Mammary epithelial cell (primary cell): ENCODE measurements at regions of chr14 and their contacts with region 1.

Region 1: DNA sequence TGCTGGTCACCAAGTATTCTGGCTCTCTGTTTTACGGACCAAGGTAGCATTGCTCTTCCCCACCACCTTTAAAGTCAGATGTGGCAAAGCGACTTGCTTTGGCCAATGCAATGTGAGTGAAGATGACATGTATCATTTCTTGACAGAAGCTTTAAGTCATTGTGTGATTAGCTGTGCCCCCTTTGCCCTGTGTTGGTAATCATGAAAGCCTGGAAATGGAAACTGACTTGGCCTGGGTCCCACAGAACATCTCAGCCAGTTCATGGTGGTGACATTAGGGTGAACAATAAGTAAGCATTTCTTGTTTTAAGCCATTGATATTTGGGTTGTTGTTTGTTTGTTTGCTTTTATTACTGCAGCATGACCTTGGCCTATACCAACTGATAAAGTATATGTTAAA is 15.9 kb upstream of the YLPM1 start:
- DNase-seq: no peak
- H3K4me3 ChIP-seq: no peak overlapping the region
- H3K27ac ChIP-seq: no peak overlapping the region
- H3K4me1 ChIP-seq: no peaks in the 10 kb centered on the region
- H3K27me3 ChIP-seq: no peaks in the 10 kb centered on the region
- CTCF ChIP-seq: no peak

Region 2: GRCh38 chr14:74618078-74618952 is 128.9 kb before region 1 on chr14:
- CTCF ChIA-PET with region 1: no interaction called
- dilution Hi-C with region 1: no loop called
- in situ Hi-C with region 1: no loop called
- intact Hi-C with region 1: no loop called
- DNase-seq: peak; percentile 72
- H3K4me3 ChIP-seq: no peak overlapping the region
- H3K27ac ChIP-seq: peak overlapping the region; percentile 23
- H3K4me1 ChIP-seq: peaks cover 94% of the 10 kb centered on the region
- H3K27me3 ChIP-seq: no peaks in the 10 kb centered on the region
- CTCF ChIP-seq: no peak

Region 3: GRCh38 chr14:74784634-74785033 is 37.4 kb after region 1 on chr14:
- CTCF ChIA-PET with region 1: no interaction called
- dilution Hi-C with region 1: loop called (anchors 5 kb)
- in situ Hi-C with region 1: no loop called
- intact Hi-C with region 1: no loop called
- DNase-seq: no peak
- H3K4me3 ChIP-seq: no peak overlapping the region
- H3K27ac ChIP-seq: no peak overlapping the region
- H3K4me1 ChIP-seq: no peaks in the 10 kb centered on the region
- H3K27me3 ChIP-seq: no peaks in the 10 kb centered on the region
- CTCF ChIP-seq: no peak

Region 4: GRCh38 chr14:74816124-74816523 is 68.9 kb after region 1 on chr14:
- CTCF ChIA-PET with region 1: no interaction called
- dilution Hi-C with region 1: loop called (anchors 5 kb)
- in situ Hi-C with region 1: no loop called
- intact Hi-C with region 1: no loop called
- DNase-seq: no peak
- H3K4me3 ChIP-seq: no peak overlapping the region
- H3K27ac ChIP-seq: no peak overlapping the region
- H3K4me1 ChIP-seq: no peaks in the 10 kb centered on the region
- H3K27me3 ChIP-seq: no peaks in the 10 kb centered on the region
- CTCF ChIP-seq: no peak